Activated CD8-positive, alpha-beta memory T cell treated with anti-CD3 and anti-CD28 coated beads, Interleukin-2, amount 10 ng/mL, durations not matched to agents 7 days and 5 days (primary cell): ENCODE measurements at regions of chr7 and their contacts with region 1.

Region 1: DNA sequence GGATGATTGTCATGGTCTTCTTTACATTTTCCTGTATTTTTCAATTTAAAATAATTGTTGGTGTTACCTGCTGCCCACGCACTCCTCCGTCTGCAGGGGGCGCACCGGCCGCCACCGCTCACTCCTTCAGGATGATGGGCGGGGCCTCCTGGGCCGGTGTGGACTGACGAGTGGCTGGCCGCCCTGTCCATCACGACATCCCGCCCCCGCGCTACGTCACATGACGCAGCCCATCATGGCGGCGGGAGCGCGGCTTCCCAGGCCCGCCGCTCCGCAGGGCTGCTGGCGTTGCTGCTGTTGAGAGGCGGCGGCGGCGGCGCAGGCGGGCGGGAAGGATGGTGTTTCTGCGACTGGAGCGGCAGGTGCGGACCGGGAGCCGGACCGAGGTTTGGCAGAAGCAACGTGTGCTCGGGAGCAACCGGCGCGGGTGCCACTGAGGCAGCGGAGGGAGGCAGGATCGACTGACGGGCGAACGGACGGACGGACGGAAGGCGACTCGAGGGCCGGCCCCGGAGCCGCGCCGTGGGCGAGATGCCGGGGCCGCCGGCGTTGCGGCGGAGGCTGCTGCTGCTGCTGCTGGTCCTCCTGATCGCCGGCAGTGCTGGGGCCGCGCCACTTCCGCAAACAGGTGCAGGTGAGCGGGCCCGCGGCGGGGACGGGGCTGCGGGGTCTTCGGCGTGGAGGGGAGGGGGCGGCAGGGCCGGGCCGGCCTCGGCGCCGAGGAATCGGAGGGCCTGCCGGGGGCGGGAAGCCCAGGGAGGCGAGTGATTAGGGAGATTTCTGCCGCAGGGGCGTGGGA is at the start of gene LMTK2:
- DNase-seq: peak; percentile 95
- ATAC-seq: peak; percentile 100
- H3K4me3 Mint-ChIP-seq: peak within 1 kb of the TSS; percentile 93
- H3K27ac Mint-ChIP-seq: peak within 1 kb of the TSS; percentile 86
- H3K4me1 Mint-ChIP-seq: peaks cover 17% of the 10 kb centered on the region
- H3K27me3 Mint-ChIP-seq: peaks cover 3% of the 10 kb centered on the region
- total RNA-seq, gene LMTK2: 8.5 to 9.6 TPM

Region 2: DNA sequence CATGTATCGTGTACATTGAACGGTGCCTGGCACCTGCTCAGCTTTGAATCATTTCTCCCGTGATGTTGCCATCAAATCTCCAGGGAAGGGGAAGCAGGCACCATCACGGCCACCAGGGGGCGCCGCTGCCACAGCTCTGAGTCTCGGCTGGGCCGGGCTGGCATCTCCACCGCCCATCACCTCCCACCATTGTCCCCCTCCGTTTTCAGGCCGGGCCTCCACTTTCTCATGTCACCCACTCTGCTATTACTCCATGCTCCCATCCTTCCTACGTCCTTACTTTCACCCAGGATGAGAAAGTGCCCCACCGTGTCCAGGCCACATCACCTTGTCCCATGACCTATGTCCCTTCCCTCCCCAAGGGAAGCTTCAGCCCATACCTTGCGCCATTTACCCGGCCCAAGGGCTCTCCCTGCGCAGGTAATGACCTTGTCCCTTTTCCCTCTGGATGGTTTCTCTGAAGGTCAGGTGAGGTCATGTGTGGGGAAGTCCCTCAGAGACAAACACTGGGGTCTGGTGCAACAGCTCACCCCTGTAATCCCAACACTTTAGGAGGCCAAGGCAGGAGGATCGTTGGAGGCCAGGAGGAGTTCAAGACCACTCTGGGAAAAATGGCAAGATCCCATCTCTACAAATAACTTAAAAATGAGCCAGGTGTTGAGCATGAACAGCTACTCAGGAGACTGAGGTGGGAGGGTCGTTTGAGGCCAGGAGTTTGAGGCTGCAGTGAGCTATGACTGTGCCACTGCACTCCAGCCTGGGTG is 85.1 kb before region 1 on chr7:
- CTCF ChIA-PET with region 1: interaction called, 12 read pairs
- DNase-seq: peak; percentile 79
- ATAC-seq: peak; percentile 91
- H3K4me3 Mint-ChIP-seq: no peak overlapping the region
- H3K27ac Mint-ChIP-seq: no peak overlapping the region
- H3K4me1 Mint-ChIP-seq: peaks cover 6% of the 10 kb centered on the region
- H3K27me3 Mint-ChIP-seq: peaks cover 3% of the 10 kb centered on the region

Region 3: DNA sequence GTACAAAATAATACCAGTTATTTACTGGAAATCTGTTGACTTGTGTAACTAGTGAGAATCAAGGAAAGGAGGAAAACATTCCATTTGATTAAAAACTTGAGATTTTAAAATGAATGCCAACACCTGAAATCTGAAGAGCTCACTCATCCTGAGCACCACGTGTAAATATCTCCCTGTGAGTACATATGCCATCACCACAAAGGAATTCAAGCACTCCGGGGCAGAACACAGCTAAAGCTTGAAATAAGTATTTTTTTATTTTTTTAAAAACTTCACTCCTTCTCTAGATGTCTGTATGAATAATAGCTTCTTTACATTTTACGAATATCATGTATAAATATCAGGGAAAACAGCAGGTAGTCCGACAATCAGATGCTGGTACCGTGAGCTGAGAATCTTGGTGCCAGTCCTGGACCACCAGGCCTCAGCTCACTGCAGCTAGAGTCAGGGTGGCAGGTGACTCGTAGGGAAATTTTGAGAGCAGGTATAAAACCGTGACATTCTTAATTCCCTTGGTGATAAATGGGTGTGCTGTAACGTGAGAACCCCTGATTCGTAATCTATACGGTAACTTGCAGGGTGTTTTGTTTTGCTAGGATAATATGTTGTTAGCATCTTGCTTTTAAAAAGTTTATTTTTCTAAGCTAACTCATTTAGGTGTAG is 12.5 kb after region 1 on chr7:
- CTCF ChIA-PET with region 1: interaction called, 12 read pairs
- DNase-seq: no peak
- ATAC-seq: no peak
- H3K4me3 Mint-ChIP-seq: no peak overlapping the region
- H3K27ac Mint-ChIP-seq: no peak overlapping the region
- H3K4me1 Mint-ChIP-seq: peaks cover 3% of the 10 kb centered on the region
- H3K27me3 Mint-ChIP-seq: no peaks in the 10 kb centered on the region